Dendritic cell treated with granulocyte-macrophage colony-stimulating factor and Interleukin-4, amounts not matched to agents 40 ng/mL and 50 ng/mL, for 4 days (primary cell): ENCODE measurements at regions of chr7 and their contacts with region 1.

Region 1: GRCh38 chr7:151876899-151877777 is at the start of gene PRKAG2:
- H3K4me3 Mint-ChIP-seq: peak within 1 kb of the TSS; percentile 98
- H3K27ac Mint-ChIP-seq: peak within 1 kb of the TSS; percentile 97
- H3K4me1 Mint-ChIP-seq: peaks cover 40% of the 10 kb centered on the region
- H3K27me3 Mint-ChIP-seq: no peaks in the 10 kb centered on the region

Region 2: GRCh38 chr7:150845421-150845861 is 1031.7 kb before region 1 on chr7:
- intact Hi-C with region 1: no loop called
- H3K4me3 Mint-ChIP-seq: no peak overlapping the region
- H3K27ac Mint-ChIP-seq: peak overlapping the region; percentile 82
- H3K4me1 Mint-ChIP-seq: peaks cover 34% of the 10 kb centered on the region
- H3K27me3 Mint-ChIP-seq: peaks cover 17% of the 10 kb centered on the region

Region 3: DNA sequence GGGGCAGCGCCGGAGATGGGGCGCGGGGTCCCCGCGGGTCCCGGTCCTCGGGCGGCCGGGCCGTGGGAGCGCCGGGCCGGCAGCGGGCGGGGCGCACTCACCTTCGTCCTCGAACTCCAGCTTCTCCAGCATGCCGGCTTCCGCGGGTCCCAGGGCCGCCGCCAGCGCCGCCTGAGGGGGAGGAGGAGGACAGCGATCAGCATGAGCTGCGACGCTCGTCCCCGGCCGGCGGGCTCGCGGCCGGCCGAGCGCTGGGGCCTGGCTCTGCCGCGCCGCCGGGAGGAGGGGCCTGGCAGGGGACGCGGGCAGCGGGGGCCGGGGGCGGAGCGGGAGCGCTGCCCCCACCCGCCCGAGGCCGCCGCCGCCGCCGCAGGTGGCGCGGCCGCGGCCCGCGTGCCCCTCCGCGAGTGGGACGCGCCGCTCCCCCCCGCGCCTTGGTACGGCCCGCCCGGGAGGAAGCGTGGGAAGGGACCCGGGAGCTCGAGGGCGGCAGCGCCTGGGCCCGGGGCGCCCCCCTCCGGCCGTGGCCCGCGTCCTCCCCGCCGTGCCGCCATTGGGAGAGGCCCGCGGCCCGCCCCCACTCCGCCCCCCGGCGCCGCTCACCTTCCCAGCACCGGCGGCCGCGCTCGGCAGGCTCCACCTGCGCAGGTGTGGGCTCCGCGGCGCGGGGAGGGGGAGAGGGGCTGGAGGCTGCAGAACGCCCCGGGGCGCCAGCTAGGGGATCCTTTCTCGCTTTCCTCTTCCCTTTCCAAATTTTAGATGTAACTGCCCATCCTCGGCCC is 245.0 kb before region 1 on chr7:
- intact Hi-C with region 1: loop called (anchors 5 kb)
- H3K4me3 Mint-ChIP-seq: peak overlapping the region; percentile 97
- H3K27ac Mint-ChIP-seq: peak overlapping the region; percentile 99
- H3K4me1 Mint-ChIP-seq: peaks cover 22% of the 10 kb centered on the region
- H3K27me3 Mint-ChIP-seq: no peaks in the 10 kb centered on the region

Region 4: GRCh38 chr7:151687523-151688218 is 189.5 kb before region 1 on chr7:
- intact Hi-C with region 1: no loop called
- H3K4me3 Mint-ChIP-seq: no peak overlapping the region
- H3K27ac Mint-ChIP-seq: no peak overlapping the region
- H3K4me1 Mint-ChIP-seq: peaks cover 45% of the 10 kb centered on the region
- H3K27me3 Mint-ChIP-seq: no peaks in the 10 kb centered on the region

Region 5: DNA sequence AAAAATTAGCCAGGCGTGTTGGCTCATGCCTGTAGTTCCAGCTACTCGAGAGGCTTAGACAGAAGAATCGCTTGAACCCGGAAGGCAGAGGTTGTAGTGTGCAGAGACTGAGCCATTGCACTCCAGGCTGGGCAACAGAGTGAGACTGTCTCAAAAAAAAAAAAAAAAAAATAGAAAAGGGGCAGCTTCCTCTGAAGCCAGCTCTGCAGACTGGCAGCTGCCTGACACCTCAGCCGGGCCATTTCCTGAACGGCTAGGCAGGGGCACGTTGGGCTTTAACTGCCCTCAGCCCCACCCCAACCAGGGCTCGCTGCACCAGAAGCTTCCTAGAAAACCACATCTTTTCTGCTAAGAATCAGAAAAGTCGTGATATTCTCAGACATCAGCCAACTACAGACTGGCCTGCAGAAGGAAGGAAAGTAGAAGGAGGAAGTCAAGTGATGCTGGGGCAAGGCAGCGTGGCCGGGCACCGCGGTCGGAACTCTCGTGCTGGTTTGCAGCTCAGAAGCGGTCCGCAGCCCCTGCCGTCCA is 38.2 kb before region 1 on chr7:
- intact Hi-C with region 1: loop called (anchors 2 kb)
- H3K4me3 Mint-ChIP-seq: peak overlapping the region; percentile 77
- H3K27ac Mint-ChIP-seq: peak overlapping the region; percentile 85
- H3K4me1 Mint-ChIP-seq: peaks cover 61% of the 10 kb centered on the region
- H3K27me3 Mint-ChIP-seq: no peaks in the 10 kb centered on the region

Region 6: DNA sequence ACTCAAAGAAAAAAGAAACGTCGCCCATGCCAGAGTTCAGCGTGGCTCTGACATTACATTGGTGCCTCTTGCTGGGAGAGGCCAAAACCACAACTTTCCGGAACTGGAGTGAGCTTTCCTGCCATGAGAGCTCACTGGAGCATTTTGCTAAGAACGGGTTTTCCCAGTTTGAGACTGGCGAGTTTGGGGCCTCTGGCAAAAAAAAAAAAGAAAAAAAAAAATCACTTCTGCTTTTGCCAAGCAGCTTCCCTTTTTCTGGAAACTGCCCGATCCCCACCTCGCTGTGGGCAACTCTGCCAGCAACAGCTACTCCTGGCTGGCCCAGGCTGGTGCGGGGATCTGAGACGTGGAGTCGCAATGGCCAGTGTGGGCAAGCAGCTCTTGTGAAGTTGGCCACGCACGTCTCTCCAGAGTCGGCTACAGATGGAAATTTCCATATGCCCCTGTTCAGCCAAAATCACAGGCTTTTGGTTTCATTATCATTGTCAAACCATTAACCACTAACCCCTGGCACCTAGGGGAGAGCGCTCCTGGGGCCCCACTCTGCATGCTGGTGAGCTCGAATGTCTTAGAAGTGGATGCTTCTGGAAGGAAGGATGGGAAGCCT is 25.9 kb before region 1 on chr7:
- intact Hi-C with region 1: loop called (anchors 2 kb)
- H3K4me3 Mint-ChIP-seq: peak overlapping the region; percentile 74
- H3K27ac Mint-ChIP-seq: peak overlapping the region; percentile 99
- H3K4me1 Mint-ChIP-seq: peaks cover 93% of the 10 kb centered on the region
- H3K27me3 Mint-ChIP-seq: no peaks in the 10 kb centered on the region

Region 7: GRCh38 chr7:151923097-151923876 is 46.1 kb after region 1 on chr7:
- intact Hi-C with region 1: loop called (anchors 2 kb)
- H3K4me3 Mint-ChIP-seq: peak overlapping the region; percentile 50
- H3K27ac Mint-ChIP-seq: peak overlapping the region; percentile 95
- H3K4me1 Mint-ChIP-seq: peaks cover 89% of the 10 kb centered on the region
- H3K27me3 Mint-ChIP-seq: no peaks in the 10 kb centered on the region

Region 8: DNA sequence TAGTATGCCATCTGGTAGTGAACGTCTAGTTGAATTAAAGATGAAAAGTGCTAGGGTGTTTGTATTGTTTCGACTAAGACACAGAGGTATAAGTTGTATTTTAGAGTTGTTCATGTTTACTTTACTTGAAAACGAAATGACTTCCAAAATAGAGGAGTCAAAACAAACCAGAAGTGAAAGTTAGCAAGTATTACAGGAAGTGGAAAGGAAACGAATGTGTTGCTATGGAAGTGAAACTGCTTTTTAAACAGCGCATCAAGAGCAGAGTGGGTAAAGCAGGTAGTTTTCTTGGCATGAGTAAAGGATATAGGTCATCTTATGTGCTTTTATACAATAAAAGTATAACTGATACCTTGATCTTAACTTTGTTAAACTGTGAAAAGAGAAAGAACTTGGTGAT is 59.1 kb after region 1 on chr7:
- intact Hi-C with region 1: loop called (anchors 2 kb)
- H3K4me3 Mint-ChIP-seq: peak overlapping the region; percentile 40
- H3K27ac Mint-ChIP-seq: peak overlapping the region; percentile 87
- H3K4me1 Mint-ChIP-seq: peaks cover 79% of the 10 kb centered on the region
- H3K27me3 Mint-ChIP-seq: peaks cover 4% of the 10 kb centered on the region